ENCODE measurements at regions of chr6 and their contacts with region 1.

Region 1: DNA sequence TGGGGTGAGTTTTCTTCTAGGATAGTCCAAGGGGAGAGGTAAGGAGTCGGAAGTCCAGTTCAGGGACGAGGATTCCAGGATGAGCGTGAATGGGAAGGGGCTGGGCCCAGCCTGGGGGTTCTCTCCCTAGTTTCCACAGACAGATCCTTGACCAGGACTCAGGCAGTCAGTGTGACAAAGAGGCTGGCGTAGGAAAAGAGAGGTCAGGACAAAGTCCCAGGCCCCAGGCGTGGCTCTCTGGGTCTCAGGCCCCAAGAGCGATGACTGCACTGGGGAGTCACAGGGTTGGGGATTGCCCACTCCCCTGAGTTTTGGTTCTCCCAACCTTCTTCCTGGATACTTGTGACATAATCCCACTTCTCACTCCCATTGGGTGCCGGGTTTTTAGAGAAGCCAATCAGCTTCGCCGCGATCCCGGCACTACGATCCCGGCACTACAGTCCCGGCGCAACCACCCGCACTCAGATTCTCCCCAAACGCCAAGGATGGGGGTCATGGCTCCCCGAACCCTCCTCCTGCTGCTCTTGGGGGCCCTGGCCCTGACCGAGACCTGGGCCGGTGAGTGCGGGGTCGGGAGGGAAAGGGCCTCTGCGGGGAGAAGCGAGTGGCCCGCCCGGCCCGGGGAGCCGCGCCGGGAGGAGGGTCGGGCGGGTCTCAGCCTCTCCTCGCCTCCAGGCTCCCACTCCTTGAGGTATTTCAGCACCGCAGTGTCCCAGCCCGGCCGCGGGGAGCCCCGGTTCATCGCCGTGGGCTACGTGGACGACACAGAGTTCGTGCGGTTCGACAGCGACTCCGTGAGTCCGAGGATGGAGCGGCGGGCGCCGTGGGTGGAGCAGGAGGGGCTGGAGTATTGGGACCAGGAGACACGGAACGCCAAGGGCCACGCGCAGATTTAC is 46.2 kb upstream of the TRIM26 start:
- DNase-seq: peak; percentile 49 to 73 (median 57)
- H3K4me3 ChIP-seq: peak overlapping the region; percentile 31 to 79
- H3K4me3 Mint-ChIP-seq: peak overlapping the region; percentile 86 to 97 (median 92)
- H3K27ac ChIP-seq: peak overlapping the region; percentile 60
- H3K27ac Mint-ChIP-seq: peak overlapping the region; percentile 70 to 93 (median 88)
- H3K4me1 ChIP-seq: peaks cover 7% of the 10 kb centered on the region
- H3K4me1 Mint-ChIP-seq: peaks cover 7 to 17% (median 10%) of the 10 kb centered on the region in 4 donors
- H3K27me3 ChIP-seq: no peaks in the 10 kb centered on the region
- H3K27me3 Mint-ChIP-seq: peaks cover 0 to 3% of the 10 kb centered on the region in 2 donors

Region 2: DNA sequence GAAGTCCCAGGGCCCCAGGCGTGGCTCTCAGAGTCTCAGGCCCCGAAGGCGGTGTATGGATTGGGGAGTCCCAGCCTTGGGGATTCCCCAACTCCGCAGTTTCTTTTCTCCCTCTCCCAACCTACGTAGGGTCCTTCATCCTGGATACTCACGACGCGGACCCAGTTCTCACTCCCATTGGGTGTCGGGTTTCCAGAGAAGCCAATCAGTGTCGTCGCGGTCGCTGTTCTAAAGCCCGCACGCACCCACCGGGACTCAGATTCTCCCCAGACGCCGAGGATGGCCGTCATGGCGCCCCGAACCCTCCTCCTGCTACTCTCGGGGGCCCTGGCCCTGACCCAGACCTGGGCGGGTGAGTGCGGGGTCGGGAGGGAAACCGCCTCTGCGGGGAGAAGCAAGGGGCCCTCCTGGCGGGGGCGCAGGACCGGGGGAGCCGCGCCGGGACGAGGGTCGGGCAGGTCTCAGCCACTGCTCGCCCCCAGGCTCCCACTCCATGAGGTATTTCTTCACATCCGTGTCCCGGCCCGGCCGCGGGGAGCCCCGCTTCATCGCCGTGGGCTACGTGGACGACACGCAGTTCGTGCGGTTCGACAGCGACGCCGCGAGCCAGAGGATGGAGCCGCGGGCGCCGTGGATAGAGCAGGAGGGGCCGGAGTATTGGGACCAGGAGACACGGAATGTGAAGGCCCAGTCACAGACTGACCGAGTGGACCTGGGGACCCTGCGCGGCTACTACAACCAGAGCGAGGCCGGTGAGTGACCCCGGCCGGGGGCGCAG is 316.9 kb before region 1 on chr6 and contains the start of gene HLA-A:
- CTCF ChIA-PET with region 1: no interaction called
- POLR2A ChIA-PET with region 1: no interaction called
- intact Hi-C with region 1: no loop called
- DNase-seq: peak; percentile 90 to 98 (median 95)
- H3K4me3 ChIP-seq: peak within 1 kb of the TSS; percentile 62 to 78
- H3K4me3 Mint-ChIP-seq: peak within 1 kb of the TSS; percentile 95 to 100 (median 99)
- H3K27ac ChIP-seq: peak within 1 kb of the TSS; percentile 100
- H3K27ac Mint-ChIP-seq: peak within 1 kb of the TSS; percentile 100
- H3K4me1 ChIP-seq: peaks cover 46% of the 10 kb centered on the region
- H3K4me1 Mint-ChIP-seq: peaks cover 29 to 72% (median 44%) of the 10 kb centered on the region in 4 donors
- H3K27me3 ChIP-seq: no peaks in the 10 kb centered on the region
- H3K27me3 Mint-ChIP-seq: peaks cover 0 to 3% of the 10 kb centered on the region in 2 donors
- total RNA-seq, gene HLA-A: 2,115 to 2,200 TPM

Region 3: GRCh38 chr6:30163090-30163917 is 96.1 kb before region 1 on chr6 and contains the start of gene TRIM15:
- CTCF ChIA-PET with region 1: no interaction called
- POLR2A ChIA-PET with region 1: no interaction called
- intact Hi-C with region 1: no loop called
- DNase-seq: peak in 2 of 5 donors; percentile 24 to 49
- H3K4me3 ChIP-seq: no peak within 1 kb of the TSS
- H3K4me3 Mint-ChIP-seq: peak within 1 kb of the TSS in 5 of 8 donors; percentile 11 to 51 (median 41)
- H3K27ac ChIP-seq: no peak within 1 kb of the TSS
- H3K27ac Mint-ChIP-seq: peak within 1 kb of the TSS in 1 of 7 donors; percentile 67
- H3K4me1 ChIP-seq: peaks cover 12% of the 10 kb centered on the region
- H3K4me1 Mint-ChIP-seq: peaks cover 10 to 21% (median 14%) of the 10 kb centered on the region in 4 donors
- H3K27me3 ChIP-seq: no peaks in the 10 kb centered on the region
- H3K27me3 Mint-ChIP-seq: peaks cover 2 to 13% of the 10 kb centered on the region in 2 donors
- total RNA-seq, gene TRIM15: not detected

Region 4: DNA sequence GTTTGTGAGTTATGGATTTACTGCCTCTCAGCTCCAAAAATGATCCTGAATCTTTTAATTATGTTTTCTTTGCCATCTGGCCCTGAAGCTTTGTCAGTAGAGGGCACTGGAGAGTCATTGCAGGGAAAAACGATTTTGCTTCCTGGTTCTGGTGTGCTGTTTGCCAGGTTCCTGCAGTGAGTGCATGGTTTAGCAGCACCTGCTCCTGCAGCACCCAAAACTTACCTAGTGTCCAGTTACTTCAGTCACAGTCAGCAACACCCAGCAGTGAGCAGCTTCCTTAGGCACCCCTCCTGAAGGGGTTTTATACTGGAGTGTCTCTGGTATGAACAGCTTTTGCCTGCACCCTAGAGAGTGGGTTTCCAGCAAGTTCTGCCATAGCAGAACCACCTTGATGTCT is 40.1 kb before region 1 on chr6:
- CTCF ChIA-PET with region 1: interaction called, 3 read pairs
- POLR2A ChIA-PET with region 1: interaction called, 6 read pairs
- intact Hi-C with region 1: loop called (anchors 1 kb)
- DNase-seq: peak; percentile 50 to 68 (median 55)
- H3K4me3 ChIP-seq: no peak overlapping the region
- H3K4me3 Mint-ChIP-seq: no peak overlapping the region
- H3K27ac ChIP-seq: no peak overlapping the region
- H3K27ac Mint-ChIP-seq: peak overlapping the region in 3 of 7 donors; percentile 62 to 73 (median 72)
- H3K4me1 ChIP-seq: peaks cover 9% of the 10 kb centered on the region
- H3K4me1 Mint-ChIP-seq: peaks cover 15 to 23% (median 17%) of the 10 kb centered on the region in 4 donors
- H3K27me3 ChIP-seq: no peaks in the 10 kb centered on the region
- H3K27me3 Mint-ChIP-seq: no peaks in the 10 kb centered on the region

Region 5: GRCh38 chr6:30238174-30238795 is 21.1 kb before region 1 on chr6:
- CTCF ChIA-PET with region 1: interaction called, 4 read pairs
- POLR2A ChIA-PET with region 1: no interaction called
- intact Hi-C with region 1: loop called (anchors 1 kb)
- DNase-seq: peak in 4 of 5 donors; percentile 16 to 32 (median 24)
- H3K4me3 ChIP-seq: no peak overlapping the region
- H3K4me3 Mint-ChIP-seq: no peak overlapping the region
- H3K27ac ChIP-seq: no peak overlapping the region
- H3K27ac Mint-ChIP-seq: no peak overlapping the region
- H3K4me1 ChIP-seq: no peaks in the 10 kb centered on the region
- H3K4me1 Mint-ChIP-seq: peaks cover 0 to 3% (median 0%) of the 10 kb centered on the region in 4 donors
- H3K27me3 ChIP-seq: no peaks in the 10 kb centered on the region
- H3K27me3 Mint-ChIP-seq: peaks cover 13 to 18% of the 10 kb centered on the region in 2 donors

Measured in CD4-positive, alpha-beta memory T cell (primary cell).